Activated naive CD8-positive, alpha-beta T cell treated with anti-CD3 and anti-CD28 coated beads, Interleukin-2, amount 10 ng/mL, durations not matched to agents 7 days and 5 days (primary cell): ENCODE measurements at regions of chr1 and their contacts with region 1.

Region 1: GRCh38 chr1:11979851-11980675 is at the start of gene MFN2:
- DNase-seq: peak; percentile 94
- ATAC-seq: peak; percentile 96
- H3K4me3 Mint-ChIP-seq: peak within 1 kb of the TSS; percentile 96
- H3K27ac Mint-ChIP-seq: peak within 1 kb of the TSS; percentile 94
- H3K4me1 Mint-ChIP-seq: peaks cover 28% of the 10 kb centered on the region
- H3K27me3 Mint-ChIP-seq: no peaks in the 10 kb centered on the region
- total RNA-seq, gene MFN2: 51.4 TPM

Region 2: GRCh38 chr1:11925938-11926292 is 54.1 kb before region 1 on chr1:
- POLR2A ChIA-PET with region 1: interaction called, 12 read pairs
- DNase-seq: no peak
- ATAC-seq: peak; percentile 29
- H3K4me3 Mint-ChIP-seq: no peak overlapping the region
- H3K27ac Mint-ChIP-seq: no peak overlapping the region
- H3K4me1 Mint-ChIP-seq: peaks cover 26% of the 10 kb centered on the region
- H3K27me3 Mint-ChIP-seq: no peaks in the 10 kb centered on the region